ENCODE measurements at regions of chr17 and their contacts with region 1.

Region 1: GRCh38 chr17:50055426-50056230 is at the start of gene ITGA3:
- DNase-seq: peak; percentile 62
- ATAC-seq: peak; percentile 56
- H3K4me3 ChIP-seq: peak within 1 kb of the TSS; percentile 40 to 80 (median 64)
- H3K4me3 Mint-ChIP-seq: peak within 1 kb of the TSS; percentile 92
- H3K27ac ChIP-seq: no peak within 1 kb of the TSS
- H3K27ac Mint-ChIP-seq: peak within 1 kb of the TSS; percentile 75
- H3K4me1 ChIP-seq: peaks cover 11 to 20% of the 10 kb centered on the region in 2 donors
- H3K4me1 Mint-ChIP-seq: peaks cover 22% of the 10 kb centered on the region
- H3K27me3 ChIP-seq: peaks cover 0 to 42% (median 3%) of the 10 kb centered on the region in 4 experiments
- H3K27me3 Mint-ChIP-seq: peaks cover 17% of the 10 kb centered on the region
- CTCF ChIP-seq: no peak
- total RNA-seq, gene ITGA3: 11.9 and 13.0 TPM in 2 replicates

Region 2: GRCh38 chr17:49980703-49981197 is 74.9 kb before region 1 on chr17:
- CTCF ChIA-PET with region 1: no interaction called
- POLR2A ChIA-PET with region 1: no interaction called
- intact Hi-C with region 1: no loop called
- DNase-seq: no peak
- ATAC-seq: no peak
- H3K4me3 ChIP-seq: no peak overlapping the region
- H3K4me3 Mint-ChIP-seq: no peak overlapping the region
- H3K27ac ChIP-seq: no peak overlapping the region
- H3K27ac Mint-ChIP-seq: no peak overlapping the region
- H3K4me1 ChIP-seq: no peaks in the 10 kb centered on the region
- H3K4me1 Mint-ChIP-seq: no peaks in the 10 kb centered on the region
- H3K27me3 ChIP-seq: peaks cover 0 to 46% (median 5%) of the 10 kb centered on the region in 4 experiments
- H3K27me3 Mint-ChIP-seq: peaks cover 63% of the 10 kb centered on the region
- CTCF ChIP-seq: no peak

Region 3: DNA sequence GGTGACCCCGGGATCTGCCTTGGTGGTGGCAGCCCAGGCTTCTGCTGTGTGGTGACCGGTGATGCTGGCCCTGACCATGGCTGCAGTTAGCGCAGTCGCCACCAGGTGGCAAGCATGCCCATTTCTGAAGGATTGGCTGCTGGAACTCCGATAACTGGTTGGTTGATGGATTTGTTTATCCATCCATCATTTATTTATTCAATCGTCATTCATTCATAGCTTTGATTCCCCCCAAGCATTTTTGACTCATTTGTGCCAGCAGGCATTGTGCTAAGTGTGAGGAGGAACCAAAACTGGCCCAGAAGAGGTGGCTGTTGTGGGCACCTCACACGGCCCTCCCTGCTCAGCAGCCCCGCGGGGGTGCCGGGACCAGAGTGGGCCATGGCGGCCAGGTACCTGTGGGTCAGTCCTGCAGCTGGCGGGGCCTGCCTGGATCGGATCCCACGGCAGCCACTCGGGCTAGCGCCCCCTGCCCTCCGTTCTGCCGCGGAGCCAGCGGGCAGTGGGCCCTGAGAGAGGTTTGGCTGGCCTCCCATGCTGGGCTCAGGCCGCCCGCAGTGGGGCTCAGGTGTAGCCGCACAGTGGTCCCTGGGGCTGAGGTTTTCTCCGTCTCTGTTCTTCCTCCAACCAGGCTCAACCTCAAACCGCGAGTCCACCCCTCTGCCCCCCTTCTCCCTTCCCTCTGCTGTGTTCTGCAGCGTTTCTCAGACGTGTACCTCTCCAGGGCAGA is 28.6 kb before region 1 on chr17:
- CTCF ChIA-PET with region 1: interaction called, 15 read pairs
- POLR2A ChIA-PET with region 1: no interaction called
- intact Hi-C with region 1: loop called (anchors 1 kb)
- DNase-seq: peak; percentile 77
- ATAC-seq: peak; percentile 88
- H3K4me3 ChIP-seq: peak overlapping the region in 1 of 5 experiments; percentile 15
- H3K4me3 Mint-ChIP-seq: peak overlapping the region; percentile 59
- H3K27ac ChIP-seq: no peak overlapping the region
- H3K27ac Mint-ChIP-seq: peak overlapping the region; percentile 71
- H3K4me1 ChIP-seq: peaks cover 10 to 13% of the 10 kb centered on the region in 2 donors
- H3K4me1 Mint-ChIP-seq: peaks cover 11% of the 10 kb centered on the region
- H3K27me3 ChIP-seq: peaks cover 0 to 31% (median 13%) of the 10 kb centered on the region in 4 experiments
- H3K27me3 Mint-ChIP-seq: peaks cover 38% of the 10 kb centered on the region
- CTCF ChIP-seq: peak; percentile 91